ENCODE measurements at regions of chr9 and their contacts with region 1.

Region 1: DNA sequence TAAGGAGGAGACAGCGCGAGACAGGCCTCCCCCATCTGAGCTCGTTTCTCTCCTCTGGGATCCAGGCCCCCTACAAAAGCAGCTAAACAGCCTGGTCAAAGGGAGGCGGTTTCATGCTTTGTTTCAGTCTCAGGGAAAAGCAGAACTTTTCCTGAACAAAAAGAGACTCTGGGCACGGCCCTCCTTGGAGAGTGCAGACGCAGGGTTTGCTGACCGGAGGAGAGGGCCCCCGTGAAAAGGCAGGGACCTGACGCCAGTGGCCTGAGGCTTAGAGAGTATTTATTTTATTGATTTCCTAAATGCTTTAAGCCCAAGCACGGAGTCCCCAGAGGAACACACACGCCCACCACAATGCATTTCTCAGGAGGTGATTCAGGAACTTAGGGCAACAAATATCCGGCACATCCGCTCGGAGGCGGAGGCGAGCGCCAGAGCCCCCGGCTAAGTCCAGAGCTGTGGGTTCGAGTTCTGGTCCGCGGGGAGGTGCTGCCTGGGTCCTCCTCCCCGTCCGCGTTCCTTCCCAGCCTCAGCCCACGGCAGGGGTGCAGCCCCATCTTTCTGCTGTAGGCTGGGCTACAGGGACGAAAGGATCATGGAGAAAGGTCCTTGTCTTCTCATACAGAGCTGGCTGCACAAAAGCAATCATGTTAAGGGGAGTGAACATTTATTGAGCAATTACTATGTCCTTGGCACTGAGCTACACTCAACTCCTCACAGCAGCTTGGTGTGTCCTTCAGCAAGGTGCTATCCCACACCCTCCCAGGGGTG is 40.0 kb downstream of the PTGES start:
- DNase-seq: no peak
- H3K4me3 ChIP-seq: no peak overlapping the region
- H3K27ac ChIP-seq: peak overlapping the region in 3 of 4 donors; percentile 2 to 78 (median 31)
- H3K4me1 ChIP-seq: peaks cover 0 to 9% (median 5%) of the 10 kb centered on the region in 4 donors
- H3K27me3 ChIP-seq: no peaks in the 10 kb centered on the region
- CTCF ChIP-seq: no peak
- EP300 ChIP-seq: no peak
- POLR2A ChIP-seq: no peak

Region 2: DNA sequence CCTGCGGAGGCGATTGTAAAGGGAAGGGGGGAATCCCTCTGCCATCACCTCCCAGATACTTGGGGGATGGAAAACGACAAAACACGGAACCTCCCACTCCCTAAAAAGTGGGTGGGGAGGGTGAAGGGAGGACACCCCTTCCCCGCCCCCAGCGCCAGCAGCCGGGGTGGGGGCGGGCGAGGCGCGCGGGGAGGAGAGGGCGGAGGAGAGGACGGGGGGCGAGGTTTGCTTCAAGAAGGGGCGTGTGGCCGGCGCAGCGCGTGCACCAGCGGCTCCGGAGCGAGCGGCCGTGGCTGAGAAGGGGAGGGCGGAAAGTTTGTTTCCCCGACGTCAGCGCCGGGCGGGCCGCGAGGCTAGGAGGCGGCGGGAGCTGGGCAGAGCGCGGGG is 47.4 kb before region 1 on chr9 and contains the start of gene PRRX2:
- intact Hi-C with region 1: loop called (anchors 5 kb)
- DNase-seq: no peak
- H3K4me3 ChIP-seq: peak within 1 kb of the TSS in 3 of 4 donors; percentile 36 to 43 (median 41)
- H3K27ac ChIP-seq: peak within 1 kb of the TSS in 2 of 4 donors; percentile 25 to 46
- H3K4me1 ChIP-seq: peaks cover 0 to 18% (median 15%) of the 10 kb centered on the region in 4 donors
- H3K27me3 ChIP-seq: peaks cover 15 to 42% (median 23%) of the 10 kb centered on the region in 3 donors
- CTCF ChIP-seq: no peak
- EP300 ChIP-seq: no peak
- POLR2A ChIP-seq: no peak
- total RNA-seq, gene PRRX2: 0.49 to 4.7 (median 2.9) TPM in 3 of 4 donors, not detected in the other

Region 3: GRCh38 chr9:129685220-129685932 is 27.4 kb before region 1 on chr9:
- intact Hi-C with region 1: no loop called
- DNase-seq: no peak
- H3K4me3 ChIP-seq: no peak overlapping the region
- H3K27ac ChIP-seq: no peak overlapping the region
- H3K4me1 ChIP-seq: no peaks in the 10 kb centered on the region
- H3K27me3 ChIP-seq: no peaks in the 10 kb centered on the region
- CTCF ChIP-seq: no peak
- EP300 ChIP-seq: no peak
- POLR2A ChIP-seq: no peak

Measured in sigmoid colon (tissue), 7 donors.